ENCODE measurements at regions of chr6 and their contacts with region 1.

Region 1: DNA sequence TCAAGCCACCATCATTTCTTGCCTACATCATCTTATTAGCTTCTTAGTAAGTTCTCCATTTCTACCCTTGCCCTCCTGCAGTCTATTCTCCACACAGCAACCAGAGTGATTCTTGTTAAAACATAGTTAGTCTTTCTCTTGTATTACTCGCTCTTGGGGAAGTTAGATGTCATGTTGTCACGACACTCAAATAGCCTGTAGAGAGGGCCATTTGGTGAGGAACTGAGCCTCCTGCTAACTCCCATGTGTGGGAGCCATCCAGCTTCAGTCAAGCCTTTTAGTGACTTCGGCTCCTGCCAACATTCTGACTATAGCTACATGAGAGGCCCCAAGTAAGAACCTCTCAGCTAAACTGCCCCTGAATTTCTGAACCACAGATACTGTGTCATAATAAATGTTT is 395.4 kb downstream of the CDC5L start:
- DNase-seq: no peak
- ATAC-seq: no peak
- H3K4me3 ChIP-seq: no peak overlapping the region
- H3K27ac ChIP-seq: no peak overlapping the region
- H3K4me1 ChIP-seq: no peaks in the 10 kb centered on the region
- H3K27me3 ChIP-seq: peaks cover 2% of the 10 kb centered on the region
- CTCF ChIP-seq: no peak

Region 2: DNA sequence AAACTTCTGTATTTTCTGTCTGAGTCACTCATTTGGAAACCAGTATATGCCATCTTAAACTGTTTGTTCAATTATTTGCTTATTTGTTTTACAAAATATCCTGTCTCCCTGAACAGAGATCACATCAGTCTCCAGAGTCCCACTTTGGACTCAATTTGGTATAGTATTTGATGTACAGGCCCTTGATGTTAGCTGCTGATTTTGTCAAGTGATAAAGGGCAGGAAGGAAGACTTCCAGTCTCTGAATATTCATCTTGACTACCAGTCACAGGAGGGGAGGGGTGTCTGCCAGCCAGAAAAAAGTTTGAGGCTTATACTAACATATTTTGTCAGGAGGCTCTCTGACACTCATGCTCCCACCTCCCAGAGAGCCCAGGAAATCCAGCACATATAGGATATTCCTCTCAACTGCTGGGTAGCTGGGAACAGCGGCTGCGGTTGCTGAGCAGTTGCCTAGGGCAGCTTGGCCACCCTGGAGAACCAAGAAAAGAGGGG is 168.4 kb after region 1 on chr6:
- CTCF ChIA-PET with region 1: no interaction called
- POLR2A ChIA-PET with region 1: no interaction called
- in situ Hi-C with region 1: no loop called
- intact Hi-C with region 1: no loop called
- DNase-seq: no peak
- ATAC-seq: no peak
- H3K4me3 ChIP-seq: no peak overlapping the region
- H3K27ac ChIP-seq: no peak overlapping the region
- H3K4me1 ChIP-seq: no peaks in the 10 kb centered on the region
- H3K27me3 ChIP-seq: no peaks in the 10 kb centered on the region
- CTCF ChIP-seq: no peak

Region 3: GRCh38 chr6:45457141-45457540 is 674.2 kb after region 1 on chr6:
- CTCF ChIA-PET with region 1: no interaction called
- POLR2A ChIA-PET with region 1: interaction called, 11 read pairs
- in situ Hi-C with region 1: no loop called
- intact Hi-C with region 1: no loop called
- DNase-seq: no peak
- ATAC-seq: no peak
- H3K4me3 ChIP-seq: no peak overlapping the region
- H3K27ac ChIP-seq: no peak overlapping the region; the same call in 1 of the 2 replicates
- H3K4me1 ChIP-seq: peaks cover 24% of the 10 kb centered on the region
- H3K27me3 ChIP-seq: no peaks in the 10 kb centered on the region
- CTCF ChIP-seq: no peak